CD4-positive, alpha-beta T cell (primary cell): ENCODE measurements at regions of chr2 and their contacts with region 1.

Region 1: GRCh38 chr2:201231781-201232466 is 28.4 kb upstream of the CASP8 start:
- DNase-seq: peak; percentile 78 to 97 (median 88)
- ATAC-seq: peak; percentile 51
- H3K4me3 ChIP-seq: peak overlapping the region; percentile 4
- H3K4me3 Mint-ChIP-seq: peak overlapping the region; percentile 97
- H3K27ac ChIP-seq: no peak overlapping the region
- H3K27ac Mint-ChIP-seq: peak overlapping the region; percentile 95
- H3K4me1 ChIP-seq: peaks cover 36% of the 10 kb centered on the region
- H3K4me1 Mint-ChIP-seq: peaks cover 70% of the 10 kb centered on the region
- H3K27me3 ChIP-seq: no peaks in the 10 kb centered on the region
- H3K27me3 Mint-ChIP-seq: no peaks in the 10 kb centered on the region
- CTCF ChIP-seq: peak; percentile 85

Region 2: GRCh38 chr2:200901459-200902072 is 330.4 kb before region 1 on chr2:
- CTCF ChIA-PET with region 1: interaction called, 4 read pairs
- POLR2A ChIA-PET with region 1: no interaction called
- intact Hi-C with region 1: loop called (anchors 1 to 2 kb)
- DNase-seq: peak; percentile 42 to 91 (median 57)
- ATAC-seq: peak; percentile 100
- H3K4me3 ChIP-seq: no peak overlapping the region
- H3K4me3 Mint-ChIP-seq: no peak overlapping the region
- H3K27ac ChIP-seq: no peak overlapping the region
- H3K27ac Mint-ChIP-seq: peak overlapping the region; percentile 21
- H3K4me1 ChIP-seq: no peaks in the 10 kb centered on the region
- H3K4me1 Mint-ChIP-seq: peaks cover 6% of the 10 kb centered on the region
- H3K27me3 ChIP-seq: no peaks in the 10 kb centered on the region
- H3K27me3 Mint-ChIP-seq: no peaks in the 10 kb centered on the region
- CTCF ChIP-seq: peak; percentile 84

Region 3: DNA sequence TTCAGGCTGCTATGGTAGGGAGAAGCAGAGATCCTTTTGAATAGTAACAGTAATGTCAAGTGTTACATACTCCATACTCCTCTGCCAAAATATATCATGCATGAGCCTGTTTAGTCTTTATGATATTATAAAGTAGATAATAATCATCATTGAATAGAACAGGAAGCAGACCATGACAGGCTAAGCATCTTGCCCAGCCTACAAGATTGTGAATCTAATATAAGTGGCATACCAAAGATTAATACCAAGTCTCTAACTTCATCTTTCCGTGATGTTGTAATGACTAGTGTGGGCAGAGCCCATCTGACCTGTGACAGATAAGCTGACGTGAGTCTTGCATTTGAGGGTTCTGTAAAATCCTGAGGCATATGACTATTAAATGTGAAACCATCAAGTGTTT is 147.1 kb before region 1 on chr2:
- CTCF ChIA-PET with region 1: no interaction called
- POLR2A ChIA-PET with region 1: no interaction called
- intact Hi-C with region 1: no loop called
- DNase-seq: no peak
- ATAC-seq: no peak
- H3K4me3 ChIP-seq: no peak overlapping the region
- H3K4me3 Mint-ChIP-seq: no peak overlapping the region
- H3K27ac ChIP-seq: no peak overlapping the region
- H3K27ac Mint-ChIP-seq: peak overlapping the region; percentile 44
- H3K4me1 ChIP-seq: peaks cover 3% of the 10 kb centered on the region
- H3K4me1 Mint-ChIP-seq: peaks cover 8% of the 10 kb centered on the region
- H3K27me3 ChIP-seq: no peaks in the 10 kb centered on the region
- H3K27me3 Mint-ChIP-seq: no peaks in the 10 kb centered on the region
- CTCF ChIP-seq: no peak

Region 4: DNA sequence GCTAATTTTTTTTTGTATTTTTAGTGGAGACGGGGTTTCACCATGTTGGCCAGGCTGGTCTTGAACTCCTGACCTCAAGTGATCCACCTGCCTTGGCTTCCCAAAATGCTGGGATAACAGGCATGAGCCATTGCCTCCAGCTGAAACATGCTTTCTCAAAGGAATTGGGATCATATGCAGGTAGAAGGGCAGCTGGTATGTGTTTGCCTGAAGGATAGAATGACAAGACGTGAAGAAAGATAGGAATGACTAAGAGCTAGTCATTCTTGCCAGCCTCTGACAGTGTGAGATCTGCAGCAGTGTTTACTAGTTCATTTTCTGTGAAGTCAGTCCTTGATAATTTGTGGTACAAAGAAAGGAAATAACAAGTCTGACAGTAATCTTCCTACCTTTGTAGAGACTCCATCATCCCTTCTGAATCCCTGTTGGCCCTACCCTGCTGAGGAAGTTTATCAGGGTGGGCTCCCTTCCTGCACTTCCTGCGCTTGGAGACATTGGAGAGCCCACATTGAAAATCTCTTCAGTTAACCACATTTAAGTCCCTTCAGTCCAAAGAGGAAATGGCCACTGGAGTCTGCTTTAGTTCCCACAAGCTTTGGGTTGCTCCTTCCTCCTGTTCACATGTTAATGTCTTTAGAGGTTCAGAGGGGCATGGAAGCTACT is 101.3 kb before region 1 on chr2:
- CTCF ChIA-PET with region 1: interaction called, 14 read pairs
- POLR2A ChIA-PET with region 1: interaction called, 3 read pairs
- intact Hi-C with region 1: no loop called
- DNase-seq: peak in 7 of 14 experiments; percentile 25 to 75 (median 48)
- ATAC-seq: peak; percentile 71
- H3K4me3 ChIP-seq: peak overlapping the region; percentile 25
- H3K4me3 Mint-ChIP-seq: peak overlapping the region; percentile 46
- H3K27ac ChIP-seq: peak overlapping the region; percentile 67 to 69
- H3K27ac Mint-ChIP-seq: peak overlapping the region; percentile 96
- H3K4me1 ChIP-seq: peaks cover 80% of the 10 kb centered on the region
- H3K4me1 Mint-ChIP-seq: peaks cover 78% of the 10 kb centered on the region
- H3K27me3 ChIP-seq: no peaks in the 10 kb centered on the region
- H3K27me3 Mint-ChIP-seq: no peaks in the 10 kb centered on the region
- CTCF ChIP-seq: no peak

Region 5: DNA sequence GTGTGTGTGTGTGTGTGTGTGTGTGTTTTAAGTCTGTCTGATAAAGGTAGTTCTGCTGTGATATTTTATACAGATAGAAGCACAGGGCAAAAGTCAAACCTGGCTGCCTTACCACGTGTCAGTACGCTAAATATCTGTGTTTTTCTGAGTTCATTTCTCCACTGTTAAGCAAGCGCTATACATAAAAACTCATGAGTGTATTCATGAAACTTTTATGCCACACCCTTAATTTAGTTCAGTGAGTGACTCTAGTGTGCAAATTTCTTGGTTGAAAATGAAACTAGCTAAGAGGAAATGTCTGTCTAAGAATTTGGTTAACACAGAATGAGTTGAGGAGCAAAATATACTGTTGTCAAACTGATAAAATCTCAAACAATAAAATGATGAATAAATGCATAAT is 37.8 kb before region 1 on chr2:
- CTCF ChIA-PET with region 1: interaction called, 26 read pairs
- POLR2A ChIA-PET with region 1: interaction called, 32 read pairs
- intact Hi-C with region 1: no loop called
- DNase-seq: peak in 3 of 14 experiments; percentile 37 to 72 (median 42)
- ATAC-seq: peak; percentile 68
- H3K4me3 ChIP-seq: no peak overlapping the region
- H3K4me3 Mint-ChIP-seq: peak overlapping the region; percentile 68
- H3K27ac ChIP-seq: peak overlapping the region; percentile 51 to 65
- H3K27ac Mint-ChIP-seq: peak overlapping the region; percentile 91
- H3K4me1 ChIP-seq: peaks cover 60% of the 10 kb centered on the region
- H3K4me1 Mint-ChIP-seq: peaks cover 78% of the 10 kb centered on the region
- H3K27me3 ChIP-seq: no peaks in the 10 kb centered on the region
- H3K27me3 Mint-ChIP-seq: no peaks in the 10 kb centered on the region
- CTCF ChIP-seq: no peak

Region 6: DNA sequence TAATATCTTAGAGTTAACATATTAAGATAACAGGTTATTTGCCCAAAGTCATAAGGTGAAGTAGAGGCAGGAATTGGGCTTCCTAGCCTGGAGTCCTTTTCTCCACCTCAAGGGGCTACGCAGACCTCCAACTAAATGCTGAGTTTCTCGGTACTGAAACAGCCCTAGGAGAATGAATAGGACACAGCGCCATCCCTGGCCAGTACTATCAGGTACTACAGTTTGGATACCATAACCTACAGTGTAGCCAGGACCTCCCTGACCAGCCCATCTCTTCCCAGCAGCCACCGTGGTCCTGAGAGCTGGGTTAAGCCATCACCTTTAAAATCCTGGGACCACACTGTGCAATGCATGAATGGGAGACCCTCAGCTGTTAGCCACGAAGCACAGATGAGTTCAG is 44.1 kb after region 1 on chr2:
- CTCF ChIA-PET with region 1: interaction called, 4 read pairs
- POLR2A ChIA-PET with region 1: interaction called, 10 read pairs
- intact Hi-C with region 1: loop called (anchors 5 kb)
- DNase-seq: no peak
- ATAC-seq: no peak
- H3K4me3 ChIP-seq: no peak overlapping the region
- H3K4me3 Mint-ChIP-seq: no peak overlapping the region
- H3K27ac ChIP-seq: no peak overlapping the region
- H3K27ac Mint-ChIP-seq: peak overlapping the region; percentile 70
- H3K4me1 ChIP-seq: peaks cover 37% of the 10 kb centered on the region
- H3K4me1 Mint-ChIP-seq: peaks cover 72% of the 10 kb centered on the region
- H3K27me3 ChIP-seq: no peaks in the 10 kb centered on the region
- H3K27me3 Mint-ChIP-seq: no peaks in the 10 kb centered on the region
- CTCF ChIP-seq: no peak

Region 7: DNA sequence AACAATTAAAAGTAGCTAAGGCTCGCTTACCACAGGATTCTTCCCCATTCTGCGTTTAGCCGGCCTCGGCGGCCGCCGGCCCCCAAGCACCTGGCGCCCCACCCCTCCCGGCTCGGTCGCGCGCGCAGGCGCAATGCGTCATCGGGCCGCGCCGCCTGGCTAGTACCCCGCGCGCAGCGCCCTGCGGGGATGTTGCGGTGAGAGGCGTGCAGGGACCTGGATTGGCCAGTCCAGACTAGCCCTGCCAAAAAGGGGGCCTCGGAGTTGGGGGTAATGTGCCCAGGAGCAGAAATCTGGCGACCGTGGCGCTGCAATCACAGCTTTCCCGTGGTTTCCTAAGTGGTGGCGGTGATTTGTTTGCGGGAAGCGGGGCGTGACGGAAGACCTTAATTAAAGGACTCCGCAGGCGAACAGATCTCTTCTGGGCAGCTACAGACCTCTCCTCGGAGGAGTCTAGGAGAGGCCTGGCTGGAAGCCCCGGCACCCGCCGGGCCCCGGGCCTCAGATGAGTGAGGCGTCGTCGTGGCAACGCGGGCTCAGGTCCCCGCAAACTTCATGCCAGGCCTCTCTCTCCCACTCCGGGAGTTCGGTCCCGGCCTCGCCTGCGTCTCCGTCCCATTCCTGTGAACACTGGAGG is 410.8 kb after region 1 on chr2:
- CTCF ChIA-PET with region 1: no interaction called
- POLR2A ChIA-PET with region 1: no interaction called
- intact Hi-C with region 1: loop called (anchors 10 kb)
- DNase-seq: peak; percentile 68 to 92 (median 80)
- ATAC-seq: peak; percentile 88
- H3K4me3 ChIP-seq: peak overlapping the region; percentile 95
- H3K4me3 Mint-ChIP-seq: peak overlapping the region; percentile 96
- H3K27ac ChIP-seq: peak overlapping the region; percentile 79 to 89
- H3K27ac Mint-ChIP-seq: peak overlapping the region; percentile 96
- H3K4me1 ChIP-seq: peaks cover 9% of the 10 kb centered on the region
- H3K4me1 Mint-ChIP-seq: peaks cover 10% of the 10 kb centered on the region
- H3K27me3 ChIP-seq: no peaks in the 10 kb centered on the region
- H3K27me3 Mint-ChIP-seq: no peaks in the 10 kb centered on the region
- CTCF ChIP-seq: peak; percentile 11

Region 8: DNA sequence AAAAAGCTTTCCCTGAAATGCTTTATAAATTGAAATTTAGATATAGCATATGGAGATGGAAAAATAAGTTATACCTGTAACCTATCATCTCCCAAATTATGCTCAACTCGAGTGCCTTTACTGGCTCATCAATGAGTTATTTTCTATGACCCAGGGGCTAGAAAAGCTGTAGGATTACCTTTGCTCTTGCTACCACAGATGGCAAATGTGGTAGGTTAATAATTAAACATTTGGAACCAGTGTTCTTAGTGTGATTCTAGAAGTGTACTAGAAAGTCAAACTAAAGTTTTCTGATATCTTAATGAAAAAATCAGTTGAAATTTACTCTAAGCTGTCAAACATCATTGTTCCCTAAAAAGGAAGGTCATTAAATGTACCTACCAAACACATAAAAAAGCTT is 526.3 kb after region 1 on chr2:
- CTCF ChIA-PET with region 1: no interaction called
- POLR2A ChIA-PET with region 1: no interaction called
- intact Hi-C with region 1: no loop called
- DNase-seq: no peak
- ATAC-seq: no peak
- H3K4me3 ChIP-seq: no peak overlapping the region
- H3K4me3 Mint-ChIP-seq: no peak overlapping the region
- H3K27ac ChIP-seq: no peak overlapping the region
- H3K27ac Mint-ChIP-seq: no peak overlapping the region
- H3K4me1 ChIP-seq: no peaks in the 10 kb centered on the region
- H3K4me1 Mint-ChIP-seq: no peaks in the 10 kb centered on the region
- H3K27me3 ChIP-seq: no peaks in the 10 kb centered on the region
- H3K27me3 Mint-ChIP-seq: no peaks in the 10 kb centered on the region
- CTCF ChIP-seq: no peak

Region 9: DNA sequence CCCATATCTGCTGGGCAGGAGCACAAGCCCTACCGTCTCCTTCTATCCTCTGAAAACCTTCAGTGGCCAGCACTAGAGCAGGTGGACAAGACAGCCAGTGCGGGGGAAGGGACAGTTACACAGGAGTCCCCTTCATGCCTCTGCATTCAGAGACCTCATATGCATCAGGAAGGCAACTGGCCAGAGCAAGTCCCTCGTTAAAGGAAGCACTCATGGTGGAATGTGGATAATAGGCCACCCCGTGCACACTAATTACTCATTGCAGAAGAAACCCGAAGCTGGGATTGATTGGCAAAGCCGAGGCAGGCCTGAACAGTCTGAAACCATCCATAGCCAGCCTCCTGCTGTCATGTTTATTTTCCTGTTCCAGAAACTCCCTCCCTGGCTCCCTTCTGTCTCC is 852.3 kb after region 1 on chr2:
- CTCF ChIA-PET with region 1: no interaction called
- POLR2A ChIA-PET with region 1: no interaction called
- intact Hi-C with region 1: no loop called
- DNase-seq: no peak
- ATAC-seq: no peak
- H3K4me3 ChIP-seq: no peak overlapping the region
- H3K4me3 Mint-ChIP-seq: no peak overlapping the region
- H3K27ac ChIP-seq: no peak overlapping the region
- H3K27ac Mint-ChIP-seq: no peak overlapping the region
- H3K4me1 ChIP-seq: no peaks in the 10 kb centered on the region
- H3K4me1 Mint-ChIP-seq: no peaks in the 10 kb centered on the region
- H3K27me3 ChIP-seq: peaks cover 0 to 3% of the 10 kb centered on the region in 2 experiments
- H3K27me3 Mint-ChIP-seq: no peaks in the 10 kb centered on the region
- CTCF ChIP-seq: no peak